ENCODE measurements at regions of chr11 and their contacts with region 1.

Region 1: GRCh38 chr11:88886796-88887195 is 179.0 kb downstream of the GRM5 start:
- DNase-seq: peak in 8 of 9 experiments; percentile 5 to 58 (median 23)
- ATAC-seq: no peak
- H3K4me3 ChIP-seq: no peak overlapping the region
- H3K4me3 Mint-ChIP-seq: no peak overlapping the region
- H3K27ac ChIP-seq: no peak overlapping the region
- H3K27ac Mint-ChIP-seq: no peak overlapping the region
- H3K4me1 ChIP-seq: no peaks in the 10 kb centered on the region
- H3K4me1 Mint-ChIP-seq: peaks cover 1% of the 10 kb centered on the region
- H3K27me3 ChIP-seq: no peaks in the 10 kb centered on the region
- H3K27me3 Mint-ChIP-seq: no peaks in the 10 kb centered on the region
- CTCF ChIP-seq: peak; percentile 36

Region 2: DNA sequence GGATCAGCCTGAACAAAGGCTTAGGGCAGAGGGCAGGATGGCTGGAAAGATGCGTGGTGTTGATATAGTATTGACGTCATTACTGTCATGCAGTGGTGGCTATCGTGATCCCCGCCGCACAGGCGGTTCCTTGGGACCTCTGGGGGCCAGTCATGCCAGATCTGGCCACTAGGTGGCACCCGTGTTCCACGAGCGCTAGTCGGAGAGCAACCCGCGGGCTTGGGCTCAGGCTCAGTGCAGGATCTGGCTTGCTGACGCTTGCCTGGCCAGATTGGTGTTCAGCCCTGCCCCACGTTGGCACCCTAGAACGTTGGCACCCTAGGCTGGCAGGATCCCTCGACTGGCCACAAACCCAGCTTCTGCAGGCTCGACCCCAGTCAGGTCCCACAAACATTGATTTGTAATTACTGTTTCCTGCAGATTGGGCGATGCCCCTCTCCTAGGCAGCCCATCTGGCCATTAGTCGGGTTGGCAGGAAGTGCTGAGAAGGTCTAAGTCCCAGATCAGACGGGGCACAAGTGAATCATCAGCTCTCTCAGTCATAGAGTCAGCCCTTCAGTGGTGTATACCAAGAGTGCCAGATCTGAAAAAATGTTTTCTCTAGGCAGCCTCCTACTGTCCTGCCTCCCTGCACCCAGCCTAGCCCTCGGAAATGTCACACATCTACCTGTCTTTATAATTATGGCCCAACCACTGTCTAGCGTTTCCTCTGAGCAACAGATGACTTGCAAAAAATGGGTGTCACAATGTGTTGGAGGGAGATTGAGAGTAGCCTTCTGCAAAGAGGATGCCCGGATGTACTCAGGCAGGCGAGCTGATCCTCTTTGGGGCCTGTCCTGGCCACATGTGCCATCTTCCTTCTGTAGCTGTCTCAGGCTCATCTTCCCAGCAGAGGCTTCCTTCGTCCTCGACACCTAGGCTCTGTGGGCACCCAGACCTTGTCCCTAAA is 1533.8 kb before region 1 on chr11:
- CTCF ChIA-PET with region 1: no interaction called
- POLR2A ChIA-PET with region 1: no interaction called
- intact Hi-C with region 1: loop called in 1 of 2 experiments (anchors 2 kb)
- DNase-seq: peak; percentile 66 to 90 (median 80)
- ATAC-seq: peak; percentile 94
- H3K4me3 ChIP-seq: no peak overlapping the region
- H3K4me3 Mint-ChIP-seq: no peak overlapping the region
- H3K27ac ChIP-seq: no peak overlapping the region
- H3K27ac Mint-ChIP-seq: no peak overlapping the region
- H3K4me1 ChIP-seq: peaks cover 5% of the 10 kb centered on the region
- H3K4me1 Mint-ChIP-seq: peaks cover 10% of the 10 kb centered on the region
- H3K27me3 ChIP-seq: no peaks in the 10 kb centered on the region
- H3K27me3 Mint-ChIP-seq: peaks cover 16% of the 10 kb centered on the region
- CTCF ChIP-seq: peak; percentile 97

Region 3: GRCh38 chr11:88231894-88232482 is 654.8 kb before region 1 on chr11:
- CTCF ChIA-PET with region 1: no interaction called
- POLR2A ChIA-PET with region 1: no interaction called
- intact Hi-C with region 1: loop called in 1 of 2 experiments (anchors 10 kb)
- DNase-seq: peak in 2 of 9 experiments; percentile 38 to 51
- ATAC-seq: peak; percentile 40
- H3K4me3 ChIP-seq: no peak overlapping the region
- H3K4me3 Mint-ChIP-seq: no peak overlapping the region
- H3K27ac ChIP-seq: no peak overlapping the region
- H3K27ac Mint-ChIP-seq: no peak overlapping the region
- H3K4me1 ChIP-seq: no peaks in the 10 kb centered on the region
- H3K4me1 Mint-ChIP-seq: no peaks in the 10 kb centered on the region
- H3K27me3 ChIP-seq: no peaks in the 10 kb centered on the region
- H3K27me3 Mint-ChIP-seq: no peaks in the 10 kb centered on the region
- CTCF ChIP-seq: peak; percentile 50

Region 4: GRCh38 chr11:88535916-88536547 is 350.8 kb before region 1 on chr11:
- CTCF ChIA-PET with region 1: interaction called, 4 read pairs
- POLR2A ChIA-PET with region 1: no interaction called
- intact Hi-C with region 1: loop called in 1 of 2 experiments (anchors 2 kb)
- DNase-seq: no peak
- ATAC-seq: no peak
- H3K4me3 ChIP-seq: no peak overlapping the region
- H3K4me3 Mint-ChIP-seq: no peak overlapping the region
- H3K27ac ChIP-seq: no peak overlapping the region
- H3K27ac Mint-ChIP-seq: no peak overlapping the region
- H3K4me1 ChIP-seq: no peaks in the 10 kb centered on the region
- H3K4me1 Mint-ChIP-seq: no peaks in the 10 kb centered on the region
- H3K27me3 ChIP-seq: no peaks in the 10 kb centered on the region
- H3K27me3 Mint-ChIP-seq: peaks cover 3% of the 10 kb centered on the region
- CTCF ChIP-seq: no peak

Region 5: GRCh38 chr11:88695689-88696414 is 190.9 kb before region 1 on chr11:
- CTCF ChIA-PET with region 1: no interaction called
- POLR2A ChIA-PET with region 1: no interaction called
- intact Hi-C with region 1: loop called in 1 of 2 experiments (anchors 10 kb)
- DNase-seq: no peak
- ATAC-seq: no peak
- H3K4me3 ChIP-seq: no peak overlapping the region
- H3K4me3 Mint-ChIP-seq: no peak overlapping the region
- H3K27ac ChIP-seq: no peak overlapping the region
- H3K27ac Mint-ChIP-seq: no peak overlapping the region
- H3K4me1 ChIP-seq: no peaks in the 10 kb centered on the region
- H3K4me1 Mint-ChIP-seq: no peaks in the 10 kb centered on the region
- H3K27me3 ChIP-seq: no peaks in the 10 kb centered on the region
- H3K27me3 Mint-ChIP-seq: no peaks in the 10 kb centered on the region
- CTCF ChIP-seq: no peak

Region 6: GRCh38 chr11:88814076-88814475 is 72.7 kb before region 1 on chr11:
- CTCF ChIA-PET with region 1: no interaction called
- POLR2A ChIA-PET with region 1: no interaction called
- intact Hi-C with region 1: no loop called
- DNase-seq: no peak
- ATAC-seq: no peak
- H3K4me3 ChIP-seq: no peak overlapping the region
- H3K4me3 Mint-ChIP-seq: no peak overlapping the region
- H3K27ac ChIP-seq: no peak overlapping the region
- H3K27ac Mint-ChIP-seq: no peak overlapping the region
- H3K4me1 ChIP-seq: no peaks in the 10 kb centered on the region
- H3K4me1 Mint-ChIP-seq: peaks cover 11% of the 10 kb centered on the region
- H3K27me3 ChIP-seq: no peaks in the 10 kb centered on the region
- H3K27me3 Mint-ChIP-seq: no peaks in the 10 kb centered on the region
- CTCF ChIP-seq: no peak